ENCODE measurements at regions of chr7 and their contacts with region 1.

Region 1: DNA sequence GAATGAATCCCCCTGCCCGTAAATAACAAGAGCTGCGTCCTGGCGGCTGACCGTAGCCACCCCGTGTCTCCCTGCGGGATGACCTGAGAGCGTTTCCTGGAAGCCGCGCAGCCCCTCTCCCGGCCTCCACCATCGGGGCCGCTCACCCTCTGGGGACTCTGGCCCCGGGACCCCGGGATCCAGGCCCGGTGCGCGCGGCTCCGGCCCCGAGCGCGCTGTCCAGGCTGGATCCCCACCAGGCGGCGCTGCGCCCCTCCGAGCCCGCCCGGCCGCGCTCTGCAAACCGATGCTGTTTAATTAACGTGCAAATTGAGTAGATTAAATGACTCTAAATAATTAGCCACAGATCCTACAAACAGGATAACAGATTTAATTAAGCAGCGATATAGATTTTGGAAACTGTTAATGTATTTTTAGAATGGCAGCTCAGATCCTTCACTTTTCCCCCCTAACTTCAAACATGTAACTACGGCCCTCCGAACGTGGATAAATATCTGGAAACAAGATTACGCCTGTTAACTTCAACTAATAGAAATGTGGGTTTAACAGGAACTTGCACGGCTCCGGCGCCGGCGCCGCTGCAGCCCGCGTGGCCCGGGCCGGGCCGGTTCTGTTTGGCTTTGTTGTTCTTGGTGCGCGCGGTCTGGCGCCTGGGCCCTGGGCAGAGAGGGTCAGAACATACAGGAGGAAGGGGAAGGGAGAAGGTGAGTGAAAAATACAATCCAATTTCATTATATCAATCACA is 7.1 kb upstream of the UNCX start:
- DNase-seq: peak in 8 of 9 donors; percentile 11 to 54 (median 42)
- ATAC-seq: peak; percentile 63
- H3K4me3 ChIP-seq: no peak overlapping the region
- H3K4me3 Mint-ChIP-seq: peak overlapping the region in 4 of 10 donors; percentile 28 to 41 (median 40)
- H3K27ac ChIP-seq: no peak overlapping the region
- H3K27ac Mint-ChIP-seq: peak overlapping the region in 4 of 9 donors; percentile 23 to 60 (median 40)
- H3K4me1 ChIP-seq: no peaks in the 10 kb centered on the region
- H3K4me1 Mint-ChIP-seq: peaks cover 0 to 23% (median 14%) of the 10 kb centered on the region in 7 donors
- H3K27me3 ChIP-seq: peaks cover 7 to 45% of the 10 kb centered on the region in 2 donors
- H3K27me3 Mint-ChIP-seq: peaks cover 47 to 77% (median 63%) of the 10 kb centered on the region in 5 donors

Region 2: DNA sequence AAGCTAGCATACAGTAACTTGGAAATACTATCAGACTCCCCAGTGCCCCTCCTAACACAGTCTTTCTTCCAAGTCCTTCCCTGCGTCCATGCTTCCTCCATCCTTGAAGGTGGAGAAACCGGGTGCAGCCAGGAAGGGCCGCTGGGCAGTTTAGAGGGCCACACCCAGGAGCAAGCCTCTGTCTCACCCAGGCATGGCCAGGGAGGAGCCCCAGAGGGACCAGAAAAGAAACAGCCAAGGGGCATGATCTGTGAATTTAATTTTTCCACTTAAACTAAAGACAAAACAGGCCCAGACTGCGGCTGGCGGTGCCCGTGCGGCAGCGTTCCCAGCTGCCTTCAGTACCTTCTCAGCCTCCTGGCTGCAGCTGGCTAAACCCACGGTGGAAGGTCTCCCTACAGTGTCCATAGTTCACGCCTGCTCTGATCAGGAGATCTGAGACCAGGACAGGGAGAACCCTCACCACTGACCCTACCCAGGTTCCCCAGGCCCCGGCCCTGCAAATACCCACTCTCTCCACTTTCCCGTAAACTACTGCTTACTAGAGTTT is 20.0 kb after region 1 on chr7:
- CTCF ChIA-PET with region 1: interaction called, 3 read pairs
- POLR2A ChIA-PET with region 1: no interaction called
- intact Hi-C with region 1: loop called in 1 of 2 experiments (anchors 2 kb)
- DNase-seq: no peak
- ATAC-seq: no peak
- H3K4me3 ChIP-seq: no peak overlapping the region
- H3K4me3 Mint-ChIP-seq: peak overlapping the region in 5 of 10 donors; percentile 11 to 68 (median 41)
- H3K27ac ChIP-seq: no peak overlapping the region
- H3K27ac Mint-ChIP-seq: peak overlapping the region in 1 of 9 donors; percentile 32
- H3K4me1 ChIP-seq: peaks cover 3 to 9% of the 10 kb centered on the region in 2 donors
- H3K4me1 Mint-ChIP-seq: peaks cover 0 to 44% (median 26%) of the 10 kb centered on the region in 7 donors
- H3K27me3 ChIP-seq: peaks cover 10 to 35% of the 10 kb centered on the region in 2 donors
- H3K27me3 Mint-ChIP-seq: peaks cover 62 to 74% (median 65%) of the 10 kb centered on the region in 5 donors

Region 3: GRCh38 chr7:1473864-1474512 is 248.4 kb after region 1 on chr7:
- CTCF ChIA-PET with region 1: interaction called, 5 read pairs
- POLR2A ChIA-PET with region 1: no interaction called
- intact Hi-C with region 1: loop called in 1 of 2 experiments (anchors 1 kb)
- DNase-seq: peak; percentile 77 to 89 (median 87)
- ATAC-seq: peak; percentile 90
- H3K4me3 ChIP-seq: no peak overlapping the region
- H3K4me3 Mint-ChIP-seq: peak overlapping the region in 1 of 10 donors; percentile 49
- H3K27ac ChIP-seq: peak overlapping the region; percentile 45
- H3K27ac Mint-ChIP-seq: no peak overlapping the region
- H3K4me1 ChIP-seq: peaks cover 3 to 14% of the 10 kb centered on the region in 2 donors
- H3K4me1 Mint-ChIP-seq: peaks cover 3 to 12% (median 9%) of the 10 kb centered on the region in 7 donors
- H3K27me3 ChIP-seq: no peaks in the 10 kb centered on the region
- H3K27me3 Mint-ChIP-seq: no peaks in the 10 kb centered on the region